Lower leg skin (tissue), 4 donors: ENCODE measurements at regions of chr5 and their contacts with region 1.

Region 1: GRCh38 chr5:38441453-38442246 is 114.8 kb downstream of the LIFR start:
- DNase-seq: peak; percentile 82 to 97
- H3K4me3 ChIP-seq: no peak overlapping the region
- CTCF ChIP-seq: peak in 1 of 3 donors; percentile 67
- POLR2A ChIP-seq: no peak

Region 2: DNA sequence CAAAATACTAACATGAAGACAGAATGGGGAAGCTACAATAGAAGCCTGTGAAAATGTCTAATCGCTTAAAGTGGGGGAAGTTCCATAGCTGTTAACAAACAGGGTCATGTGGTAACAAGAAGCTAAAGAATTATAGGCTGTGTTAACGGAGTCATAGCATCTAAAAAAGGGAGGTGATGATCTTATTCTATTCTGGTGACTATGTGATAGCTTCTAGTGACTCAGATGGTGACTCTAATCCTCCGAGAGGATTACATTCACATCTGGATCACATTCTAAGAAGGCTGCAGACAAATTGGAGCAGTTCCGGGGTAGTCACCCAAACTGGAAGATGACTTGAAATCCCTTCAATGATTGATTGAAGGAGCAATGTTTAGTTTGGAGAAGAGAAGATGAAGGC is 27.3 kb before region 1 on chr5:
- intact Hi-C with region 1: loop called (anchors 1 kb)
- DNase-seq: peak in 1 of 2 donors; percentile 26
- H3K4me3 ChIP-seq: no peak overlapping the region
- CTCF ChIP-seq: no peak
- POLR2A ChIP-seq: no peak

Region 3: GRCh38 chr5:38809388-38810359 is 368.0 kb after region 1 on chr5:
- intact Hi-C with region 1: loop called (anchors 10 kb)
- DNase-seq: peak; percentile 77 to 96
- H3K4me3 ChIP-seq: no peak overlapping the region
- CTCF ChIP-seq: peak in 1 of 3 donors; percentile 21
- POLR2A ChIP-seq: no peak